ENCODE measurements at regions of chr17 and their contacts with region 1.

Region 1: DNA sequence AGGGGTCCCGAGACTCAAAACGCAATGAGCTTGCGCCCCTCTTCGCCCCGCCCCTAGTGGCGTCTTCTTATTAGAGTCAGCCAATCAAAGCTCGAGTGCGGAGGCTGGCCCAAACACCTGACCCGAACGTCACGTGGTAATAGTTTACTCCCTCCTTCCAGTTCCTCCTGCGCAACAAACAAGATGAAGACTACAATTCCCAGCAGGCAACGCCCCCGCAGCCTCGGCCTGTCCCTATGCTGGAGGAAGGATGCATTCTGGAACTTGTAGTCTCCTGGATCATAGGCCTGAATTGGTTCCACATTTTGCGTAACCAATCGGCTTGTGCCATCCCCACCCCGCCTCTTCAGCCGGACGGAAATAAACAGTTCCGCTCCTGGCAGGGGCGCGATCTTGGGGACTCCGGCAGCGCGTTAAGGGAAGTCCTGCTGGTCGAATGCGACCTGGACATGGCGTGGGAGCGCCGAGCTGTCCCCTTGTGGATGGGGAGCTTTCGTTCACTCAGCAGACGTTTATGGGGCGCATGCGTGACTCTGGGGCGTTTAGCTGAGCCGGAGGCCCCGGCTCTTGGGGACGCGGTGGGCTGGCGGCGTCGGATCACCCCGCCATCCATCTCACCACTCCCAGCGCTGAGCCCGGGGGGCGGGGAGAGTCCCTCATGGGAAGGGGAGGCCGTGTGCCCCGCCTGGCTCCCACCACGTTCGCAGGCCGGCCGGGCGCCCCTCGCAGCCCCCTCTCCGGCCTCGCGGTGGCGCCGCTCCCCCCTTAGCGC is at the start of gene WBP2:
- DNase-seq: peak; percentile 100
- ATAC-seq: peak; percentile 92
- H3K4me3 ChIP-seq: peak within 1 kb of the TSS; percentile 79
- H3K27ac ChIP-seq: peak within 1 kb of the TSS; percentile 93
- H3K4me1 ChIP-seq: peaks cover 23% of the 10 kb centered on the region
- H3K27me3 ChIP-seq: no peaks in the 10 kb centered on the region
- CTCF ChIP-seq: peak; percentile 49 to 53 (median 52); a peak in 4 of 6 replicates
- EP300 ChIP-seq: no peak
- POLR2A ChIP-seq: peak; percentile 98
- RAD21 ChIP-seq: peak; percentile 64
- polyA plus RNA-seq, gene WBP2: 1.5 to 3.0 TPM

Region 2: DNA sequence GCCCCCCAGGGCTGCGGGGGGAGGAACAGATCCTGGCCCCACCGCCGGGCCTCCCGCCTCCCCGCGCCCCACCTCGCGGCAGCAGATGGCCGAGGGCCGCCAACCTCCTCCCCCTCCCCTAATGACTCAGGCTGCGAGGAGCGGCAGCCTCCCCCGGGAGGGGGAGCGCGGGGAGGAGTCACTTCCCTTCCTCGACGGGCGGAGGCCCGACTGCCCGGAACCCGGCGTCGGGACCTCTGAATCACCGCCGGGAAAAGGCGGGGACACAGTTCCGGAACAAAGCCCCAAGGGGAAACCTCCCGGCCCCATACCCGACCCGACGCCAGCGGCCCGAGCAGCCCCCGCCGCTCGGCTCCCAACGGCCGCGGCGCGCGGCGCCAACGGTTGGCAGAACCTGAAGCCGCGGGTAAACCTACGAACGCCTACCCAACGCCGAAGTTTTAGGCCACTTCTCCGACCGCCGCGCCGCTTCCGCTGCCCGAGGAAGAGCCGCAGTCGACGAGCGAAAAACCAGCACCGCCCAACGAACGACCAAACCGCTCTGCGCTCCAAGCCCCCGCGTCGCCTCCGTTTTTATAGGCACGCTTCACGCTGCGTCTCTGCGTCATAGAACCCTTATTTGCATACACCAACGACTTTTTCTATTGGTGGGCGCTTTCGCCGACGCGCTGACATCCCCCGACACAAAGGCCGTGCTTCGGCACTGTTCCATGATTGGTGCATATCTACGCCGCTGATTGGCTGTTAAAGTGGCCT is 76.1 kb before region 1 on chr17:
- CTCF ChIA-PET with region 1: interaction called, 8 read pairs
- POLR2A ChIA-PET with region 1: interaction called, 30 read pairs
- RAD21 ChIA-PET with region 1: interaction called, 13 read pairs
- SMC1A ChIA-PET with region 1: interaction called, 7 read pairs
- in situ Hi-C with region 1: no loop called
- intact Hi-C with region 1: loop called (anchors 2 kb)
- DNase-seq: peak; percentile 100
- ATAC-seq: peak; percentile 81
- H3K4me3 ChIP-seq: peak overlapping the region; percentile 88
- H3K27ac ChIP-seq: peak overlapping the region; percentile 90
- H3K4me1 ChIP-seq: peaks cover 16% of the 10 kb centered on the region
- H3K27me3 ChIP-seq: no peaks in the 10 kb centered on the region
- CTCF ChIP-seq: no peak
- EP300 ChIP-seq: peak in 1 of 2 experiments; percentile 24; a peak in 1 of 4 replicates
- POLR2A ChIP-seq: peak; percentile 100
- RAD21 ChIP-seq: no peak

Region 3: GRCh38 chr17:75808905-75809715 is 46.4 kb before region 1 on chr17:
- CTCF ChIA-PET with region 1: interaction called, 3 read pairs
- POLR2A ChIA-PET with region 1: interaction called, 13 read pairs
- RAD21 ChIA-PET with region 1: interaction called, 8 read pairs
- SMC1A ChIA-PET with region 1: interaction called, 4 read pairs
- in situ Hi-C with region 1: no loop called
- intact Hi-C with region 1: no loop called
- DNase-seq: peak; percentile 57
- ATAC-seq: peak; percentile 90
- H3K4me3 ChIP-seq: no peak overlapping the region
- H3K27ac ChIP-seq: 0 out of 2 replicates have a peak overlapping the region, but pooled peaks have one; percentile 6
- H3K4me1 ChIP-seq: peaks cover 9% of the 10 kb centered on the region
- H3K27me3 ChIP-seq: no peaks in the 10 kb centered on the region
- CTCF ChIP-seq: no peak
- EP300 ChIP-seq: no peak
- POLR2A ChIP-seq: no peak
- RAD21 ChIP-seq: no peak

Region 4: GRCh38 chr17:75877752-75878173 is 22.3 kb after region 1 on chr17:
- CTCF ChIA-PET with region 1: interaction called, 81 read pairs
- POLR2A ChIA-PET with region 1: interaction called, 27 read pairs
- RAD21 ChIA-PET with region 1: interaction called, 16 read pairs
- SMC1A ChIA-PET with region 1: interaction called, 8 read pairs
- in situ Hi-C with region 1: no loop called
- intact Hi-C with region 1: no loop called
- DNase-seq: no peak
- ATAC-seq: peak; percentile 83
- H3K4me3 ChIP-seq: peak overlapping the region; percentile 29; the same call in 1 of the 2 replicates
- H3K27ac ChIP-seq: no peak overlapping the region
- H3K4me1 ChIP-seq: peaks cover 25% of the 10 kb centered on the region
- H3K27me3 ChIP-seq: peaks cover 2% of the 10 kb centered on the region in 2 experiments
- CTCF ChIP-seq: peak; percentile 40 to 50 (median 45); a peak in 5 of 6 replicates
- EP300 ChIP-seq: no peak
- POLR2A ChIP-seq: no peak
- RAD21 ChIP-seq: no peak

Region 5: DNA sequence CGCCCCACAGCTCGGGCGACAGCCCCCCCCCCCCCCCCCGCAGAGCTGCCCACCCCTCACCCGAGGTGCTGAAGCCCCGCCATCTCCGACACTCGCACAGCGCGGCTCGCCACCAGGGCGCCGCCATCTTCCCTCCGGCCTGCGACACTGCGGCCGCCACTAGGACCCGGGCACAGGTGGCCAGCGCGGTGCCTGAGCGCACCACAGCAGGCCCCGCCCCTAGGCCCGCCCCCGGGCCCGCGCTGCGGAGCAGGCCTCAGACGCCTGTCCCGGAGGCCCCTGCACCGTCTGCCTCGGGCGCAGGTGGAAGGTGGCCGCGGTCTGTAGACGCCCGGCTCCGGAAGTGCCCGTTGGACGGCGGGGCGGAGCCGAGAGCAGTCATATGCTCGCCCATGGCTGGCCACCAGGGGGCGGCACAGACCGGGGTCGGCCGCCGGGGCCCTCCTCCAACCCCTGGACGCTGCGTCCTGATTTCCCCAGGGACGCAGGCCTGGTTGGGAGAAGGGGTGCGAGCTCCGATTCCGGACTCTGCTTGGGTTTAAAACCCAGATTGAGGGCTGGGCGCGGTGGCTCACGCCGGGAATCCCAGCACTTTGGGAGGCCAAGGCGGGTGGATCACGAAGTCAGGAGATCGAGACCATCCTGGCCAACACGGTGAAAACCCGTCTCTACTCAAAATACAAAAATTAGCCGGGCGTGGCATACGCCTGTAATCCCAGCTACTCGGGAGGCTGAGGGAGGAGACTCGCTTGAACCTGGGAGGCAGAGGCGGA is 49.4 kb after region 1 on chr17 and contains the start of gene MRPL38:
- CTCF ChIA-PET with region 1: interaction called, 7 read pairs
- POLR2A ChIA-PET with region 1: interaction called, 7 read pairs
- RAD21 ChIA-PET with region 1: interaction called, 12 read pairs
- SMC1A ChIA-PET with region 1: interaction called, 5 read pairs
- in situ Hi-C with region 1: no loop called
- intact Hi-C with region 1: no loop called
- DNase-seq: peak; percentile 80
- ATAC-seq: peak; percentile 99
- H3K4me3 ChIP-seq: peak within 1 kb of the TSS; percentile 95
- H3K27ac ChIP-seq: peak within 1 kb of the TSS; percentile 71
- H3K4me1 ChIP-seq: no peaks in the 10 kb centered on the region; the same call in 1 of the 2 replicates
- H3K27me3 ChIP-seq: no peaks in the 10 kb centered on the region
- CTCF ChIP-seq: peak; percentile 87 to 98 (median 90); a peak in 5 of 6 replicates
- EP300 ChIP-seq: no peak; a peak in 1 of 4 replicates
- POLR2A ChIP-seq: peak; percentile 91
- RAD21 ChIP-seq: peak; percentile 85
- polyA plus RNA-seq, gene MRPL38: 6.6 to 20.1 TPM

Measured in GM12878 (cell line).